Dendritic cell treated with granulocyte-macrophage colony-stimulating factor and Interleukin-4, amounts not matched to agents 40 ng/mL and 50 ng/mL, for 4 days (primary cell): ENCODE measurements at regions of chr11 and their contacts with region 1.

Region 1: DNA sequence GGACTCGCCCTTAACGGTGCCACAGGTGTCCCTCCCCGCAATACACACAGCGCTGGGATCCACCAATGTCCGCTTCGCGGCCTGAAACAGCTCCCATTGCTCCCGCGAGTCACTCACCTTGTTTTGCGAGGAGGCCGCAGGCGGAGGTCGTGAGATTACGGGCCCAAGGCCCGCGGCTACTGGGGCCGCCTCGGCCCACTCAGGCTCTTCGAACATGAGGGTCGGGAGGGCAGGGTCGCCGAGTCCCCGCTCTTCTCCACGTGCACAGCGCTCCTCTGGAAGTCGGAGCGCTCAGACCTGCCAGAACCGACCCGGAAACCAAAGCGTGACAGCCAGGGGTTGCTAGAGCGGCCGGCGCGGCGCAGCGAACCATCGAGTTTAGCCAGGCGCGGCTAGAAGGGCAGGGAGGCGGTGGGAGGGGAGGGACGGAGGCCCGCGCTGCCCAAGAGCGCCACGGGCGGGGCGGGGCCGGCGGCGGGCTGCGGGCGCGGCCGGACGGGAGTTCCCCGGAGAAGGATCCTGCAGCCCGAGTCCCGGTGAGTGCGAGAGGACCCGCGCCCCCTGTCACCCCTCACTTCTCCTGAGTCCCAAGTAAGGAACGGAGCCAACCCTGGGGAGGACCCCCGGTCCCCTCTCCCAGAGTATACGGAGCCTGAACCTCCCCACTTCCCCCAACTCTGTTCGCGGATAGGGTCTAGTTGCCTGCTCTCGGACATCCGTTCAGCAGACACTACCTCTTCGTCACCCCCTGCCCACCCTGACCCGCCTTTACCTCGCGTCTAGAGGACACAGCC is at the starts of genes ILK and RRP8:
- H3K4me3 Mint-ChIP-seq: no peak within 1 kb of the TSS
- H3K27ac Mint-ChIP-seq: no peak within 1 kb of the TSS
- H3K4me1 Mint-ChIP-seq: peaks cover 16% of the 10 kb centered on the region
- H3K27me3 Mint-ChIP-seq: no peaks in the 10 kb centered on the region

Region 2: DNA sequence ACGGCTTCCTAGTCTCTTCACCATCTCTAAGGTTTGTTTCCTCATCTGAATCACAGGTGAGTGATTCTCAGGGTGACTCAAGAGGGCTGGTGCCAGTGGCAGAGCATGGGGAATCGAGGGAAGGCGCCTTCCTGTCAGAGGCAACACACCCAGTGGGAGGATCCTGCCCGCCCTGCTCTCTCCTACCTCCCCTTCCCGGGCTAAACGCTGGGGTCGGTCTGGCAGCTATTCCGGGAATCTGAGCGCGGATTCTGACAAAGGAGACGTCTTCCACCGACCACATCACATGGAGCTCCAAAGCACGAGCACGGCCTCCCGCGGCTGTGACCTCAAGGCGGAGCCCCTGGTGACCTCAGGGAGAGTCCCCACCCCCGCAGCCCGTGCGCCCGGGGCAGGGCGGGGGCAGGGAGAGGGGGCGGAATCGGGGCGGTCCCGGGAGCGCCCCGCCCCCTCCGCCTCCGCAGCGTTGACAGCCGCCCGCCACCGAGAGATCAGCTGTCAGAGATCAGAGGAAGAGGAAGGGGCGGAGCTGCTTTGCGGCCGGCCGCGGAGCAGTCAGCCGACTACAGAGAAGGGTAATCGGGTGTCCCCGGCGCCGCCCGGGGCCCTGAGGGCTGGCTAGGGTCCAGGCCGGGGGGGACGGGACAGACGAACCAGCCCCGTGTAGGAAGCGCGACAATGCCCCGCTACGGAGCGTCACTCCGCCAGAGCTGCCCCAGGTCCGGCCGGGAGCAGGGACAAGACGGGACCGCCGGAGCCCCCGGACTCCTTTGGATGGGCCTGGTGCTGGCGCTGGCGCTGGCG is 213.4 kb before region 1 on chr11 and contains the start of gene SMPD1:
- intact Hi-C with region 1: loop called (anchors 10 kb)
- H3K4me3 Mint-ChIP-seq: peak within 1 kb of the TSS; percentile 87
- H3K27ac Mint-ChIP-seq: peak within 1 kb of the TSS; percentile 94
- H3K4me1 Mint-ChIP-seq: peaks cover 34% of the 10 kb centered on the region
- H3K27me3 Mint-ChIP-seq: peaks cover 7% of the 10 kb centered on the region

Region 3: DNA sequence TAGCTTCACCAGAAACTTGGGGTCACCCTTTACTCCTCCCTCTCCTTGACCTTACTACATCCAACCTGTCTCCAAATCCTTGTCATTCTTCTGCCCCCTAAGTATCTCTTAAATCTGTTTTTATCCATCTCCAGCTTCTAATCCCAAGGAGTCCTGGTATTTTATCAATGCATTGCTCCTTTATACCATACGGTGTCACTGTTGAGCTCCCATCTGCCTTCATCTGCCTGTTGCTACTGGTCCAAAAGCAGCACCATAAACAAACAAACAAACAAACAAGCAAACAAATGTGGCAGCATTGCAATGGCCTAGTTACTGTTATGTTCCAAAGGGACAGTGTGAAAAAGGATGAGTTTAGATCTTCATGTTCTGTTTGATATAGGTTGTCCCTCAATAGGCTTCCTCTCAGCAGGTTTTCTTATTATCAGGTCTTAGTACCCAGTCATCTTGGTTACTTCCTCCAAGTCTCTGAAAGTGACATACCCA is 72.2 kb before region 1 on chr11:
- intact Hi-C with region 1: loop called (anchors 10 kb)
- H3K4me3 Mint-ChIP-seq: no peak overlapping the region
- H3K27ac Mint-ChIP-seq: no peak overlapping the region
- H3K4me1 Mint-ChIP-seq: no peaks in the 10 kb centered on the region
- H3K27me3 Mint-ChIP-seq: no peaks in the 10 kb centered on the region

Region 4: GRCh38 chr11:6619004-6619745 is 15.7 kb after region 1 on chr11 and contains the start of gene TPP1:
- intact Hi-C with region 1: loop called (anchors 1 kb)
- H3K4me3 Mint-ChIP-seq: no peak within 1 kb of the TSS
- H3K27ac Mint-ChIP-seq: no peak within 1 kb of the TSS
- H3K4me1 Mint-ChIP-seq: peaks cover 6% of the 10 kb centered on the region
- H3K27me3 Mint-ChIP-seq: peaks cover 2% of the 10 kb centered on the region

Region 5: DNA sequence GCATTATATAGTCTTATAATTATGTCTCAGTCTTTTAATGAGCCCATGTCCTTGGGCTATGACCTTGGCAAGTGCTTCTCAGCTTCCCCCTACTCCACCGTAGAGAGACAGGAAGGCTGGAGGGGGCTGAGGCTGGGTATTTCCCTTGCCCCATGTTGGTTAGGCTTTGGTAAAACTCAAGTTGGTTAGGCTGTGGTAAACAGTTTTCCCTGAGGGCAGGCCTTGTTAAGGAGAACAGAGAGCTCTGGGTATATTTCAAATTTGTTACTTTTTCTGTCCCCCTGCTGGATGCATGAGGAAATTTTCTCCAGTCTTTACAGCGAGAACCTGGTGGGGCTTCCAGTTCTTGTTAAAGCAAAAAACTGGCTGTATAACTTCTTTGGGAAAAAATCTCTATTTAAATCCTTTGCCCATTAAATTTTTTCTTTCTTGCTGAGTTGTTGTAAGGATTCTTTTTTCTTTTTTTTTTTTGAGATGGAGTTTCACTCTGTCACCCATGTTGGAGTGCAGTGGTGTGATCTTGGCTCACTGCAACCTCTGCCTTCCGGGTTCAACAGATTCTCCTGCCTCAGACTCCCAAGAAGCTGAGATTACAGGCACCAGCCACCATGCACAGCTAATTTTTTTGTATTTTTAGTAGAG is 64.4 kb after region 1 on chr11:
- intact Hi-C with region 1: no loop called
- H3K4me3 Mint-ChIP-seq: no peak overlapping the region
- H3K27ac Mint-ChIP-seq: peak overlapping the region; percentile 54
- H3K4me1 Mint-ChIP-seq: peaks cover 14% of the 10 kb centered on the region
- H3K27me3 Mint-ChIP-seq: peaks cover 6% of the 10 kb centered on the region